Naive thymus-derived CD4-positive, alpha-beta T cell (primary cell): ENCODE measurements at regions of chr21 and their contacts with region 1.

Region 1: DNA sequence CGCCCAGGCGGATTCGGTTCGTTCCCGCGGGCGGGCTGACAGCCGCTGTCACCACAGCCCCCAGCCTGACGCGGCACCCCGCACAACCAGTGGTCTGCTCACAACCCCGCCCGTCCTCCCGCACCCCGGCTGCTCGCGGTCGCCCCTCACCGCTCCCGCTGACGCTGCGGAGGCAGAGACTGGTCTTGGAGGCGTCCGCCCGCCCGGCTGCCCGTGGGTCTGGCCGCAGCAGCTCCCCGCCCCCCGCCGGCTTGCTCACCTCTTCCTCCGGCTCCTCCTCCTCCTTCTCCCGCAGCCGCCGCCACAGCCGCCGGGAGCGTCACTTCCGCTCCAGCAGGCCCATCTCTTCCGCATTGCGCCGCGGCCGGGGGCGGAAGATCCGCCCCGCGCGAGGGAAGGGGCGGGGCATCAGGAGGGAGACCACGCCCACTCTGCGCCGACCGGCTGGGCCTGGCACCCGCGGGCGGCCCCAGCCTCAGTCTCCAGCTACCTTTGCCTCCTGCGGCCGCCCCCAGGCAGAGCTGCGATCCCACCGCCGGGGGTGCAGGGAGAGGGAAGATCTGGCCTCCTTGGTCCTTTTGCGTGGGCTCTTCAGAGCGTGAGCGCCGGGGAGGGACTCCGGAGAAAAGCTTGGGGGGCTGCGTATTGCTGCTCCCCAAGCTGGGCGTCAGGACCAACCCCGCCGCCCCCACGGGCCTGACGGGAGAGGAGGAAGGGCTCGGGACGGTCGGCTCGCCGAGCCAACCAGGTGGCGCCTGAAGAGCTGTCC is at the start of gene SYNJ1:
- DNase-seq: peak; percentile 90 to 97 (median 93)
- ATAC-seq: peak; percentile 95
- H3K4me3 ChIP-seq: peak within 1 kb of the TSS; percentile 78
- H3K4me3 Mint-ChIP-seq: peak within 1 kb of the TSS; percentile 92 to 100 (median 98)
- H3K27ac ChIP-seq: peak within 1 kb of the TSS; percentile 82
- H3K27ac Mint-ChIP-seq: peak within 1 kb of the TSS; percentile 90 to 99 (median 97)
- H3K4me1 ChIP-seq: peaks cover 7 to 42% of the 10 kb centered on the region in 2 donors
- H3K4me1 Mint-ChIP-seq: peaks cover 29 to 78% (median 69%) of the 10 kb centered on the region in 7 donors
- H3K27me3 ChIP-seq: no peaks in the 10 kb centered on the region
- H3K27me3 Mint-ChIP-seq: no peaks in the 10 kb centered on the region
- total RNA-seq, gene SYNJ1: 21.5 to 28.5 (median 22.2) TPM

Region 2: DNA sequence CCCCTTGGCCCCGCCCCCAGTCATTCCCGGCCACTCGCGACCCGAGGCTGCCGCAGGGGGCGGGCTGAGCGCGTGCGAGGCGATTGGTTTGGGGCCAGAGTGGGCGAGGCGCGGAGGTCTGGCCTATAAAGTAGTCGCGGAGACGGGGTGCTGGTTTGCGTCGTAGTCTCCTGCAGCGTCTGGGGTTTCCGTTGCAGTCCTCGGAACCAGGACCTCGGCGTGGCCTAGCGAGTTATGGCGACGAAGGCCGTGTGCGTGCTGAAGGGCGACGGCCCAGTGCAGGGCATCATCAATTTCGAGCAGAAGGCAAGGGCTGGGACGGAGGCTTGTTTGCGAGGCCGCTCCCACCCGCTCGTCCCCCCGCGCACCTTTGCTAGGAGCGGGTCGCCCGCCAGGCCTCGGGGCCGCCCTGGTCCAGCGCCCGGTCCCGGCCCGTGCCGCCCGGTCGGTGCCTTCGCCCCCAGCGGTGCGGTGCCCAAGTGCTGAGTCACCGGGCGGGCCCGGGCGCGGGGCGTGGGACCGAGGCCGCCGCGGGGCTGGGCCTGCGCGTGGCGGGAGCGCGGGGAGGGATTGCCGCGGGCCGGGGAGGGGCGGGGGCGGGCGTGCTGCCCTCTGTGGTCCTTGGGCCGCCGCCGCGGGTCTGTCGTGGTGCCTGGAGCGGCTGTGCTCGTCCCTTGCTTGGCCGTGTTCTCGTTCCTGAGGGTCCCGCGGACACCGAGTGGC is 1068.2 kb before region 1 on chr21 and contains the start of gene SOD1:
- CTCF ChIA-PET with region 1: no interaction called
- POLR2A ChIA-PET with region 1: no interaction called
- intact Hi-C with region 1: loop called in 1 of 2 experiments (anchors 2 kb)
- DNase-seq: peak in 8 of 9 donors; percentile 20 to 98 (median 97)
- ATAC-seq: peak; percentile 97
- H3K4me3 ChIP-seq: peak within 1 kb of the TSS; percentile 79
- H3K4me3 Mint-ChIP-seq: peak within 1 kb of the TSS; percentile 95 to 100 (median 100)
- H3K27ac ChIP-seq: peak within 1 kb of the TSS; percentile 88
- H3K27ac Mint-ChIP-seq: peak within 1 kb of the TSS; percentile 97 to 100 (median 98)
- H3K4me1 ChIP-seq: peaks cover 15 to 50% of the 10 kb centered on the region in 2 donors
- H3K4me1 Mint-ChIP-seq: peaks cover 40 to 80% (median 68%) of the 10 kb centered on the region in 7 donors
- H3K27me3 ChIP-seq: no peaks in the 10 kb centered on the region
- H3K27me3 Mint-ChIP-seq: no peaks in the 10 kb centered on the region
- total RNA-seq, gene SOD1: 110 to 218 (median 182) TPM

Region 3: GRCh38 chr21:32278518-32279376 is 449.1 kb before region 1 on chr21 and contains the start of gene MIS18A:
- CTCF ChIA-PET with region 1: no interaction called
- POLR2A ChIA-PET with region 1: no interaction called
- intact Hi-C with region 1: loop called (anchors 1 to 5 kb)
- DNase-seq: peak; percentile 92 to 98 (median 95)
- ATAC-seq: peak; percentile 97
- H3K4me3 ChIP-seq: peak within 1 kb of the TSS; percentile 90
- H3K4me3 Mint-ChIP-seq: peak within 1 kb of the TSS; percentile 95 to 100 (median 98)
- H3K27ac ChIP-seq: peak within 1 kb of the TSS; percentile 70
- H3K27ac Mint-ChIP-seq: peak within 1 kb of the TSS; percentile 90 to 97 (median 94)
- H3K4me1 ChIP-seq: peaks cover 14 to 16% of the 10 kb centered on the region in 2 donors
- H3K4me1 Mint-ChIP-seq: peaks cover 8 to 36% (median 33%) of the 10 kb centered on the region in 7 donors
- H3K27me3 ChIP-seq: no peaks in the 10 kb centered on the region
- H3K27me3 Mint-ChIP-seq: no peaks in the 10 kb centered on the region
- total RNA-seq, gene MIS18A: 3.3 to 16.4 (median 8.4) TPM

Region 4: DNA sequence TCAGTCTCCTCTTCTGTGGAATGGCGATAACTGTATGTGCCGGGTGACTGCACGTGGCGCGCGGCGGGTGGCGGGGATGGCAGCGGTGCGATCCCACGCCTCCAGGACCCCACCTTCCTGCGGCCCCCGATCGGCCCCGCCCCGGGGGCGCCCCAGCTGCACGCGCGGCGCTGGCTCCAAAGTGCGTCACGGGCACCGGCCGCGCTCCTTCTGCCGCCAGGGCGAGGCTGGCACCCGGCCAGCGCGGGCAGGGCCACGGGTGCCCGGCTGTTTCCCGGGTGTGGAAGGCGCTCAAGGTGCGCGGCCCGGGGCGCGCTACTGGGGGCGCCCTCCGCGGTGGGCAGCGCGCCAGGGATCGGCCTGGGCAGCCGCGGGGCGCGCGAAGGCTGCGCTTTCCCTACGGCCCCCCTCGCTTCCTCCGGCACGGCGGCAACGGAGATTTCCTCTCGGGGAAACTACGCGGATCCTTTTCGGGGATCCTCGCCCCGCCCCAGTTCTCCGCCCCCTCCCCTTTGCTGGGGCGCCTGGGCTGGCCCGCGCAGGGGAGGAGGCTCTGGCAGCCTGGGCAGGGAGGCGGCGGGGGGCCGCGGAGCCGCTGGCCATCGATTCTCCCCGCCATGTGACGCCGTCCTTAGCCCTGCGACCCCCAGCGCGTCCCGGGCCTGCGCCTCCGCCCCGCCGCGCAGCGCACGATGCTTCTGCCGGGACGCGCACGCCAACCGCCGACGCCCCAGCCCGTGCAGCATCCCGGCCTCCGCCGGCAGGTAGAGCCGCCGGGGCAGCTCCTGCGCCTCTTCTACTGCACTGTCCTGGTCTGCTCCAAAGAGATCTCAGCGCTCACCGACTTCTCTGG is 315.5 kb before region 1 on chr21 and contains the start of gene EVA1C:
- CTCF ChIA-PET with region 1: no interaction called
- POLR2A ChIA-PET with region 1: no interaction called
- intact Hi-C with region 1: loop called in 1 of 2 experiments (anchors 1 kb)
- DNase-seq: peak; percentile 56 to 73 (median 70)
- ATAC-seq: peak; percentile 81
- H3K4me3 ChIP-seq: peak within 1 kb of the TSS; percentile 76
- H3K4me3 Mint-ChIP-seq: peak within 1 kb of the TSS; percentile 88 to 97 (median 94)
- H3K27ac ChIP-seq: peak within 1 kb of the TSS; percentile 85
- H3K27ac Mint-ChIP-seq: peak within 1 kb of the TSS; percentile 89 to 95 (median 93)
- H3K4me1 ChIP-seq: peaks cover 14 to 29% of the 10 kb centered on the region in 2 donors
- H3K4me1 Mint-ChIP-seq: peaks cover 22 to 57% (median 28%) of the 10 kb centered on the region in 7 donors
- H3K27me3 ChIP-seq: no peaks in the 10 kb centered on the region
- H3K27me3 Mint-ChIP-seq: peaks cover 0 to 7% (median 0%) of the 10 kb centered on the region in 5 donors
- total RNA-seq, gene EVA1C: 2.6 to 16.3 (median 12.3) TPM

Region 5: DNA sequence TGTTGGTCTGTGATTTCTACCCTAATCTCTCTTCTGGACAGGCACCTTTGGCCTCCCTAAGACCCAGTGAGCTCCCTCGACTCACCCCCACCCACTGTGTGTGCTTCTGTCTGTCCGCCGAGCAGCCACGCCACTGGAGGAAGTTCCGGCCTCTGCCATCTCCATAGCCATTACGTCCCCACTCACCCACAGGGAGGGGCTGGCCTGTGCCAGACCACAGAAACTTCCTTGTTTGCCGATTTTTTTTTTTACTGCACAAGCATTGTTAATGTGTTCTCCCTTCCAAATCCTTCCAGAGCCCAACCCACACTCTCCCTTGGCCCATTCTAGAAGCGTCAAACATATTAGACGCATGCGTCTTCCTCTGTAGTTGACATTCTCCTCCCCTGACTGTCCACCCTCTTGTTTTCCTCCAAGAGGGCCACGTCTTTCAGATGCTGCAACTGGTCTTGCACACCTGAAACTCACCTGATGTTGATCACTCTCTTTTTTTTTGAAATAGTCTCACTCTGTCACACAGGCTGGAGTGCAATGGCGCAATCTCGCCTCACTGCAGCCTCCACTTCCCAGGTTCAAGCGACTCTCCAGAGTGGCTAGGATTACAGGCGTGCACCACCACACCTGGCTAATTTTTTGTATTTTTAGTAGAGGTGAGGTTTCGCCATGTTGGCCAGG is 243.0 kb before region 1 on chr21:
- CTCF ChIA-PET with region 1: no interaction called
- POLR2A ChIA-PET with region 1: no interaction called
- intact Hi-C with region 1: no loop called
- DNase-seq: no peak
- ATAC-seq: peak; percentile 65
- H3K4me3 ChIP-seq: no peak overlapping the region
- H3K4me3 Mint-ChIP-seq: peak overlapping the region in 1 of 10 donors; percentile 37
- H3K27ac ChIP-seq: no peak overlapping the region
- H3K27ac Mint-ChIP-seq: peak overlapping the region in 1 of 9 donors; percentile 76
- H3K4me1 ChIP-seq: no peaks in the 10 kb centered on the region
- H3K4me1 Mint-ChIP-seq: peaks cover 0 to 9% (median 0%) of the 10 kb centered on the region in 7 donors
- H3K27me3 ChIP-seq: no peaks in the 10 kb centered on the region
- H3K27me3 Mint-ChIP-seq: no peaks in the 10 kb centered on the region

Region 6: GRCh38 chr21:32712043-32712442 is 15.8 kb before region 1 on chr21:
- CTCF ChIA-PET with region 1: no interaction called
- POLR2A ChIA-PET with region 1: interaction called, 3 read pairs
- intact Hi-C with region 1: loop called in 1 of 2 experiments (anchors 2 kb)
- DNase-seq: peak in 1 of 9 donors; percentile 10
- ATAC-seq: peak; percentile 42
- H3K4me3 ChIP-seq: no peak overlapping the region
- H3K4me3 Mint-ChIP-seq: peak overlapping the region in 3 of 10 donors; percentile 1 to 62 (median 4)
- H3K27ac ChIP-seq: no peak overlapping the region
- H3K27ac Mint-ChIP-seq: peak overlapping the region in 3 of 9 donors; percentile 23 to 47 (median 39)
- H3K4me1 ChIP-seq: peaks cover 4 to 6% of the 10 kb centered on the region in 2 donors
- H3K4me1 Mint-ChIP-seq: peaks cover 16 to 52% (median 41%) of the 10 kb centered on the region in 7 donors
- H3K27me3 ChIP-seq: no peaks in the 10 kb centered on the region
- H3K27me3 Mint-ChIP-seq: no peaks in the 10 kb centered on the region

Region 7: GRCh38 chr21:33324291-33325221 is 596.7 kb after region 1 on chr21 and contains the start of gene IFNAR1:
- CTCF ChIA-PET with region 1: no interaction called
- POLR2A ChIA-PET with region 1: no interaction called
- intact Hi-C with region 1: loop called in 1 of 2 experiments (anchors 5 kb)
- DNase-seq: peak; percentile 94 to 100 (median 98)
- ATAC-seq: peak; percentile 94
- H3K4me3 ChIP-seq: peak within 1 kb of the TSS; percentile 87
- H3K4me3 Mint-ChIP-seq: no peak within 1 kb of the TSS
- H3K27ac ChIP-seq: peak within 1 kb of the TSS; percentile 94
- H3K27ac Mint-ChIP-seq: no peak within 1 kb of the TSS
- H3K4me1 ChIP-seq: peaks cover 21 to 23% of the 10 kb centered on the region in 2 donors
- H3K4me1 Mint-ChIP-seq: peaks cover 0 to 33% (median 26%) of the 10 kb centered on the region in 7 donors
- H3K27me3 ChIP-seq: no peaks in the 10 kb centered on the region
- H3K27me3 Mint-ChIP-seq: peaks cover 0 to 2% (median 0%) of the 10 kb centered on the region in 5 donors
- total RNA-seq, gene IFNAR1: 24.7 to 60.8 (median 40.0) TPM

Region 8: GRCh38 chr21:33491373-33492102 is 763.7 kb after region 1 on chr21 and contains the start of gene DNAJC28:
- CTCF ChIA-PET with region 1: no interaction called
- POLR2A ChIA-PET with region 1: interaction called, 4 read pairs
- intact Hi-C with region 1: loop called in 1 of 2 experiments (anchors 1 kb)
- DNase-seq: peak; percentile 91 to 96 (median 95)
- ATAC-seq: peak; percentile 99
- H3K4me3 ChIP-seq: peak within 1 kb of the TSS; percentile 93
- H3K4me3 Mint-ChIP-seq: peak within 1 kb of the TSS; percentile 86 to 97 (median 92)
- H3K27ac ChIP-seq: peak within 1 kb of the TSS; percentile 74
- H3K27ac Mint-ChIP-seq: peak within 1 kb of the TSS; percentile 73 to 97 (median 92)
- H3K4me1 ChIP-seq: peaks cover 0 to 5% of the 10 kb centered on the region in 2 donors
- H3K4me1 Mint-ChIP-seq: peaks cover 5 to 14% (median 12%) of the 10 kb centered on the region in 7 donors
- H3K27me3 ChIP-seq: no peaks in the 10 kb centered on the region
- H3K27me3 Mint-ChIP-seq: peaks cover 0 to 15% (median 0%) of the 10 kb centered on the region in 5 donors
- total RNA-seq, gene DNAJC28: 0.27 to 1.5 (median 0.61) TPM in 4 of 5 experiments, not detected in the other